Activated CD4-positive, alpha-beta memory T cell treated with anti-CD3 and anti-CD28 coated beads for 36 hours (primary cell): ENCODE measurements at regions of chr14 and their contacts with region 1.

Region 1: DNA sequence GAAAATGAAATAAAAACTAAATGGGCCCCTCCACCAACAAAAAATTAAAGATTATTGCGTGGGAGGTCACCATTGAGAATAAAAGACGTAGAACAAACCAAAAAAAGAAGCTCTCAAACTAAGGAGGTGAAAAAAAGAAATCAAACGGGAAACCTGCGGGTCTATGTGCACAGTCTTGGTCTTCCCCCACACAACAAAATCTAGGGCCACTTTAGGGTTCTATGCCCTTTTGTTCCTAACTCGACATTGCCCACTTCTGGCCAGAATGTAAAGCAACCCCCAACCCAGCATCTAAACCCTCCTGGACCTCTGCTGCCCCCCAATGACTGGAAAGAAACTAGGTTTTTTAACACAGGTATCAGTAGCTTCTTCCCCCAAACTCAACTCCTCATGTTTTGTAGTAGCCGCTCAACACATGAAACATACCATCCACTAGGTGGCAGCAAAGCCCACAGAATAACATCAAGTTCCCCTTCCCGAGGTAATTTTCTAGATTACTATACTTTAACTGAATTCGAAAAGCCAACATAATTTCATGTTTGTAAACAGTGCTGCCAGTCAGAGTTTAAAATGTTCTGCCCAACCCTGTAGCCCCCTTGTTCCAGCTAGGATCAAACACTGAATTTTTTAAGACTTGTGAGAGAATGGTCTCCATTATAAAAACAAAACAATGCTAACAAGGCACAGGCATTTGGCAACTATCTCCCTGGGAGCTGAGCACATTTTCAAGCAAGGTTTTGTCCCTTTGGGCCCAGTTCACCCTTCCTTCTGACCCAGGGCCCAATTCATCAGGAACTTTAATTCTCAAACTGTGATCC is 18.7 kb downstream of the DAD1 start:
- DNase-seq: peak; percentile 91
- H3K4me3 Mint-ChIP-seq: peak overlapping the region; percentile 80
- H3K27ac Mint-ChIP-seq: peak overlapping the region; percentile 99
- H3K4me1 Mint-ChIP-seq: peaks cover 74% of the 10 kb centered on the region
- H3K27me3 Mint-ChIP-seq: no peaks in the 10 kb centered on the region

Region 2: DNA sequence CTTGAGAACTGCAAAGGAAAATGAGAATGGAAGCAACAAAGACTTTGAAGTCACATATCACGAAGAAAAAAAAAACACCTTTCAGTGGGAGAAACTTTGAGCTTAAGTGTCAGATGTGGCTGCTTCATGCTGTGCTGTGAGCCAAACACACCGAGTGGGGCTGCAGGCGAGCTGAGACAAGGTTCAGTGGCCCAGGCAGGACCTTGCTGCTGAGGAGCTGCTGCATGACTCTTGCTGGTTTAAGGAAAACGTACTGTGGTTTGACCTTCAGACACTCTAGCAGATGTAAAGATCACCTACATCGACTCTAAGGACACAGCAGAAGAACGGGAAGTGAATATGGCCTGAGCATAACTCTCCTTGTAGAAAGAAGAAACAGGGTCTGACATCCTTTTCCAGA is 778.6 kb before region 1 on chr14:
- CTCF ChIA-PET with region 1: no interaction called
- POLR2A ChIA-PET with region 1: no interaction called
- intact Hi-C with region 1: no loop called
- DNase-seq: no peak
- H3K4me3 Mint-ChIP-seq: no peak overlapping the region
- H3K27ac Mint-ChIP-seq: no peak overlapping the region
- H3K4me1 Mint-ChIP-seq: no peaks in the 10 kb centered on the region
- H3K27me3 Mint-ChIP-seq: peaks cover 5% of the 10 kb centered on the region

Region 3: GRCh38 chr14:21978184-21978998 is 592.0 kb before region 1 on chr14:
- CTCF ChIA-PET with region 1: interaction called, 15 read pairs
- POLR2A ChIA-PET with region 1: no interaction called
- intact Hi-C with region 1: no loop called
- DNase-seq: peak; percentile 74
- H3K4me3 Mint-ChIP-seq: peak overlapping the region; percentile 72
- H3K27ac Mint-ChIP-seq: peak overlapping the region; percentile 77
- H3K4me1 Mint-ChIP-seq: peaks cover 12% of the 10 kb centered on the region
- H3K27me3 Mint-ChIP-seq: peaks cover 3% of the 10 kb centered on the region

Region 4: DNA sequence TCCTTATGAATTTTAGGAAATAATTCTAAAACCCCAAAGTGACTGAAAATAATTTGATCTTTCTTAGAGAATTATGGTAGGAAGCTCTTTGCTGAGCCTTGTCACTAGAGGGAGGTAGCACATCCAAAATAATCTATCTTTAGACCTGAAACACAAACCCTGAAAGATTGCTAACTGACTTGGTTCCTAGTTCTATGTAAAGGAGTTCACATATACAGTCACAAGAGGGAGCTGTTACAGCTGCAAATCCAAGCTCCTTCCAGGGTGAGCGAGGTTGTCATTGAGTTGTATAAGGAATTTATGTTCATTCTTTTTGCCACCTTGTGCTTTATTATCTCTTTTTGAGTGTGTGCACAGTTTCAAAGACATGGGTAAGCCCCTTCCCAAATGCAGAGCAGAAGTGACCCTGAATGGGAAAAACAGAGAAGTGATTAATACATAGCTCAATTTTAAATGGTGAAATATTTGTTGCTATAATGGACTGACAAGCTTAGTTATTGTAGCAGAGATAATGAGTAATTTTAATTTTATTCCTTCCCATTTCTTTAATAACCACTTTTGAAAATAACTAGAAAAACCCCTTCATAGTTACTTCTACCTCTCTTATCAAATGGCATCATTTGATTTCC is 369.2 kb before region 1 on chr14:
- CTCF ChIA-PET with region 1: interaction called, 11 read pairs
- POLR2A ChIA-PET with region 1: interaction called, 3 read pairs
- intact Hi-C with region 1: no loop called
- DNase-seq: no peak
- H3K4me3 Mint-ChIP-seq: no peak overlapping the region
- H3K27ac Mint-ChIP-seq: no peak overlapping the region
- H3K4me1 Mint-ChIP-seq: peaks cover 15% of the 10 kb centered on the region
- H3K27me3 Mint-ChIP-seq: no peaks in the 10 kb centered on the region

Region 5: GRCh38 chr14:22536853-22537338 is 33.4 kb before region 1 on chr14:
- CTCF ChIA-PET with region 1: interaction called, 24 read pairs
- POLR2A ChIA-PET with region 1: interaction called, 98 read pairs
- intact Hi-C with region 1: no loop called
- DNase-seq: peak; percentile 92
- H3K4me3 Mint-ChIP-seq: peak overlapping the region; percentile 81
- H3K27ac Mint-ChIP-seq: peak overlapping the region; percentile 99
- H3K4me1 Mint-ChIP-seq: peaks cover 95% of the 10 kb centered on the region
- H3K27me3 Mint-ChIP-seq: no peaks in the 10 kb centered on the region

Region 6: GRCh38 chr14:22646570-22647254 is 76.4 kb after region 1 on chr14:
- CTCF ChIA-PET with region 1: interaction called, 11 read pairs
- POLR2A ChIA-PET with region 1: interaction called, 4 read pairs
- intact Hi-C with region 1: loop called (anchors 2 kb)
- DNase-seq: no peak
- H3K4me3 Mint-ChIP-seq: no peak overlapping the region
- H3K27ac Mint-ChIP-seq: no peak overlapping the region
- H3K4me1 Mint-ChIP-seq: peaks cover 5% of the 10 kb centered on the region
- H3K27me3 Mint-ChIP-seq: no peaks in the 10 kb centered on the region

Region 7: DNA sequence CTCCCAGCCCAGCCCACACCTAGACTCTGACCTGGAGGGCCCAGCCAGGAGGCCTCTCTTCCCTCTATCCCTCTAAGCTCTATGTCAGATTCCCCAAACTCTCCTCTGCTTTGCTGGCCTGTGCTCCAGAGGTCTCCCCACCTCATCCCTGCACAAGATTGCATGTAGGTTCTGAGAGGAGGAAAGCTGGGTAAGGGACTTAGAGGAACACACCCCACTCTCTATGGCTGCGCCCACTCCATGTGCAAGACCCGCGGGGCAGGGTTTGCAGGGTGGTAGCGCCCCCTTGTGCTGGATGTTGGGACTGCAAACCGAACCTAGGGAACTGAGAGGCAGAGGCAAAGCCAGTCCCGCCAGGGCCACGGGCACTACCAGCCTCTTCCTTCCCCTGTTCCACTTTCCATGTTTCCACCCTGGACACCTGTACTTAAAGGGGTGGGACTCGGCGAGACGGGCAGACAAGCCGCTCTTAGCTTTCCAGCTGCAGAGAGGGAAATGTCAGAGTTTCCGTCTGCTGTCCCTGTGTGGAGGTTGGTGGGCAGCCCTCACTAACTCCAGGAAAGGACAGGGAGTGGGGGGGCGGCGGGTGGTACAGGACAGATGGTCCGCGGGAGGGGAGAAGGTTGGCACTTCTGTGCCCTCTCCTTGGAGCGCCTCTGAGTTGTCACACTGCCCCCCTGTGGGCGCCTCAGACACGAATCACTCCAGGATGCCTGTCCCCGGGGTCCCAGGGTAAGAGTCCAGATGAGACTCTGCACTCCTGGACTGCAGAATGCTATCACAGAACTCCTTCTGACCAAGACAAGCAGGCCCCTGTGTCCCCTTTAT is 282.8 kb after region 1 on chr14:
- CTCF ChIA-PET with region 1: interaction called, 119 read pairs
- POLR2A ChIA-PET with region 1: interaction called, 4 read pairs
- intact Hi-C with region 1: loop called (anchors 1 kb)
- DNase-seq: peak; percentile 94
- H3K4me3 Mint-ChIP-seq: peak overlapping the region; percentile 72
- H3K27ac Mint-ChIP-seq: peak overlapping the region; percentile 73
- H3K4me1 Mint-ChIP-seq: peaks cover 32% of the 10 kb centered on the region
- H3K27me3 Mint-ChIP-seq: peaks cover 5% of the 10 kb centered on the region

Region 8: DNA sequence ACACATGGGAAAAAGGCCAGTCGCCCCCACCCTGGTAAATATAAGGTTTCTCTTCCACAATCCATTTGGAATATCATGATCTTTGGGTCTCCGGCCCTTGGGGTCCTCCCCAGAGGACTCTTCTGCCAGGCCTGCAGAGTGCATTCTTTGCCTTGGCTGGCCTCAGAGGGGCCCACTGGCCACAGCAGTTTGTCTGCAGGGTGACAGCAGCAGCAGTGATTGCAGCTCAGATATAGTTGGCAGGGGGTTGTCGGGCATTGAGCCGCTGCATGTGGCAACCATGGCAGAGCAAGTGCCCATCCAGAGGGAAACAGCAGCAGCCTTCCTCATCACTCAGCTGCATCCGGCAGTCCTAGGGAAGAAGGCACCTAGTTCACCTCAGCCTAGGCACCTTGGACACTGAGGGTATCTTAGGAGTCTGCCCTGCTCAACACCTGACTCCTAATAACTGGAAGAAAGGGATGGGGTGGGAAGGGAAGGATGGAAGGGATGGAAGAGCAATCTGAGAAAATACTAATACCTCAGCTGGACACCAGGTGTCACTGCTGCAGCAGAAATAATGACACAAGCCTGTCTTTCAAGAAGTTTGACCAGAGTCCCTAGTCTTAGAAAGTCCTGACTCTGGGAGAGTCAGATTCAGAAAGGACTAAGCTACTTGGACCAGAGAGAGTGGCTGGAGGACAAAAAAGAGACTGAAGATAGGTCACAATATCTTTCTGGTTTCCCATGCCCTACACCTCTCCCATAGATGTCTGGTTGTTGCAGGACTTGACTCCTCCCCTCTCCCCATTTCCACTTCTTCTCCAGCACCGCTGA is 403.1 kb after region 1 on chr14:
- CTCF ChIA-PET with region 1: no interaction called
- POLR2A ChIA-PET with region 1: no interaction called
- intact Hi-C with region 1: no loop called
- DNase-seq: peak; percentile 55
- H3K4me3 Mint-ChIP-seq: no peak overlapping the region
- H3K27ac Mint-ChIP-seq: no peak overlapping the region
- H3K4me1 Mint-ChIP-seq: no peaks in the 10 kb centered on the region
- H3K27me3 Mint-ChIP-seq: no peaks in the 10 kb centered on the region